Mammary epithelial cell (primary cell): ENCODE measurements at regions of chr11 and their contacts with region 1.

Region 1: DNA sequence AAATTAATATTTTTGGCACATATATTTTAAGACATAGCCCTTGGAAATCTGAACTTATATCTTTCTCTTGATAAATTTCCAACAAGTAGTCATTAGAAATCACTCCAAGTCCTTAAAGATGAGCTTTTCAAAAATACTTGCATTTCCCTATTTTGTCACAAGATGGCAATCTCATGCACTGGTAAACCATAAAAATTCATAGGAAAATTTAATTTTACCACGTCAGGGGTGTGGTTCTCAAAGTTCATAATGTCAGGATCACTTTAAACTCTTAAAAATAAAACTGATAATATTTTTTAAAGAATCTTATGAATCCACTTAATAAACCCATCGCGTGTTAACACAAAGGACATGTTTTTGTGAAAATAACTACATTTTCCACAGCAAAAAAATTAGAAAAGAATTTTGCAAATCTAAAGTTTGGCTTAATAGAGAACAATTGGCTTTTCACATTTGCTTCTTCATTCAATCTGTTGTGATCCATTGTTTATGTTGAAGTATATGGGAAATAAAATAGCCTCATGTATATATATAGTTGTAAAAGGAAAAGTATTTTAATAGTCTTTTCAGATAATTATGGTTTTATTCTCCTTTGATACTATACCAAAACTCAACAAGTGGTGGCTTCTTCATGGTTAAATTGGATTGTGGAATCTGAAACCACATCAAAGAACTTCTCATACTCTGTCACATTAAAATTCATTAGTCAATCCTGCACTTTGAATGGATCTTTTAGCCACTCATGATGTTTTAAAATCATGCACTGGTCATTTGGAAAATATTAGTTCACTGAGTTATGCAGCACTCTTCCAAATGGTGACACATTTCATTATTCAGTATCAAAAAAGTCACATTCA is 169.1 kb downstream of the CADM1 start:
- DNase-seq: peak; percentile 3
- H3K4me3 ChIP-seq: no peak overlapping the region
- H3K27ac ChIP-seq: no peak overlapping the region
- H3K4me1 ChIP-seq: peaks cover 4% of the 10 kb centered on the region
- H3K27me3 ChIP-seq: no peaks in the 10 kb centered on the region
- CTCF ChIP-seq: peak; percentile 64 to 71

Region 2: DNA sequence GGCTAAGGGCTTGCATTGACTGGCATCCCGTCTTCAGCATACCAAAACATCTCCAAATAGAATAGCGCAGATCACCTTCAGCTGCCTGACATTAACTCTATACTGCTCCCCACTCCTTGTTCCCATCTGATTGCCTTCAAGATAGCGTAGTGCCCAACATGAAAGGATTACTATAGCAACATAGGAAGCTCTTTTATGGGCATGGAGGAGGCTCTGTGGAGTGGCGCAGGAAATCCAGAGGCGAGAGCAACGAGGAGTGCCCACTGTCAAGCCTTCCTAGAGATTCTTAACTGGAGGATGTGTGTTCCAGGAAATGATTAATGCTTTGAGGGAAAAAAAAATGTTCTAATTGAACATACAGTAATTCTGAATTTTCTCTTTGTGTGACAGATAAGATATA is 44.3 kb before region 1 on chr11:
- CTCF ChIA-PET with region 1: no interaction called
- dilution Hi-C with region 1: no loop called
- in situ Hi-C with region 1: no loop called
- intact Hi-C with region 1: no loop called
- DNase-seq: no peak
- H3K4me3 ChIP-seq: no peak overlapping the region
- H3K27ac ChIP-seq: no peak overlapping the region
- H3K4me1 ChIP-seq: no peaks in the 10 kb centered on the region
- H3K27me3 ChIP-seq: no peaks in the 10 kb centered on the region
- CTCF ChIP-seq: no peak

Region 3: GRCh38 chr11:115347138-115347537 is 12.0 kb after region 1 on chr11:
- CTCF ChIA-PET with region 1: no interaction called
- dilution Hi-C with region 1: no loop called
- in situ Hi-C with region 1: no loop called
- intact Hi-C with region 1: no loop called
- DNase-seq: no peak
- H3K4me3 ChIP-seq: no peak overlapping the region
- H3K27ac ChIP-seq: no peak overlapping the region
- H3K4me1 ChIP-seq: no peaks in the 10 kb centered on the region
- H3K27me3 ChIP-seq: no peaks in the 10 kb centered on the region
- CTCF ChIP-seq: no peak

Region 4: GRCh38 chr11:115623021-115623451 is 287.9 kb after region 1 on chr11:
- CTCF ChIA-PET with region 1: no interaction called
- dilution Hi-C with region 1: no loop called
- in situ Hi-C with region 1: no loop called
- intact Hi-C with region 1: loop called (anchors 1 kb)
- DNase-seq: peak; percentile 68
- H3K4me3 ChIP-seq: no peak overlapping the region
- H3K27ac ChIP-seq: peak overlapping the region; percentile 5
- H3K4me1 ChIP-seq: peaks cover 34% of the 10 kb centered on the region
- H3K27me3 ChIP-seq: no peaks in the 10 kb centered on the region
- CTCF ChIP-seq: no peak

Region 5: DNA sequence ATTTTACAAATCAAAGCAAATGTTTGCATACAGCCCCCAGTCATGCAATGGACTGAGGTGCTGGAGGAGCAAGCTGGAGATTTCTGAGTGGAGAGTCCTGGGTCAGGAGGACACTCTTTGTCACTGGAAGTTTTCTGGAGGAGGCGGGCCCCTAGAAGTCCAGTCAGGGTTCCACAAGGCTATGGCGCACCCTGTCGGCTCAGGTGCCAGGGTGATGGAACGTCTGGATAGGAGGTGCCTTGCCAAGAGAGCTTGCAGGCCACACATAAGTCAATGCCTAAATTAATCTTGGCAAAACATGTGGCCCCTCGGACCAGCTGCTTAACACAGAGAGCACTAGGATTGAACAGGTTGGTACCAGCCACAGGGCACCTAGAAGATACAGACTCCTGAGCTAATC is 343.8 kb after region 1 on chr11:
- CTCF ChIA-PET with region 1: no interaction called
- dilution Hi-C with region 1: no loop called
- in situ Hi-C with region 1: no loop called
- intact Hi-C with region 1: loop called (anchors 2 kb)
- DNase-seq: no peak
- H3K4me3 ChIP-seq: no peak overlapping the region
- H3K27ac ChIP-seq: no peak overlapping the region
- H3K4me1 ChIP-seq: peaks cover 15% of the 10 kb centered on the region
- H3K27me3 ChIP-seq: no peaks in the 10 kb centered on the region
- CTCF ChIP-seq: peak; percentile 34 to 57

Region 6: DNA sequence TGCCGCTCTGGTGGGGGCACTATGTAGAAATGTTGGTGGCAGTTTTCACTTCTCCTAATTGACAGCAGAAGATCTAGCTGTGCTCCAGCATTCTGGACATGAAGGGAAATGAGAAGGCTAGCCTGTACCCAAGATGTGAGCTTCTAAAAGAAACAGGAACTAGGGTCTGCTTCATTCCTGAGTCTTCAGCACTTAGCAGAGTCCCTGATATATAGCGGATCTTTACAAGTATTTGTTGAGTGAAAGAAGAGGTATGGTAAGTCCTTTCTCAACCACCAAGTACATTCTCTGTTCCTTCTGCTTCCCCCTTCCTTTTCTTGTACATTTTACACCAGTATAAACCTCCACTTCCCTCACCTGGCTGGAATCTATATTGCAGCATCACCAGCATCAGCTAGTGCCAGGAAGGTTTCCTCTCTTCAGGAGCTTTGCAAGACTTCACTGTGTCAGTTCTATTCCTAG is 577.4 kb after region 1 on chr11:
- CTCF ChIA-PET with region 1: no interaction called
- dilution Hi-C with region 1: no loop called
- in situ Hi-C with region 1: loop called in 1 of 2 experiments (anchors 25 kb)
- intact Hi-C with region 1: loop called (anchors 2 kb)
- DNase-seq: peak; percentile 30
- H3K4me3 ChIP-seq: no peak overlapping the region
- H3K27ac ChIP-seq: no peak overlapping the region
- H3K4me1 ChIP-seq: no peaks in the 10 kb centered on the region
- H3K27me3 ChIP-seq: no peaks in the 10 kb centered on the region
- CTCF ChIP-seq: peak; percentile 60 to 71

Region 7: DNA sequence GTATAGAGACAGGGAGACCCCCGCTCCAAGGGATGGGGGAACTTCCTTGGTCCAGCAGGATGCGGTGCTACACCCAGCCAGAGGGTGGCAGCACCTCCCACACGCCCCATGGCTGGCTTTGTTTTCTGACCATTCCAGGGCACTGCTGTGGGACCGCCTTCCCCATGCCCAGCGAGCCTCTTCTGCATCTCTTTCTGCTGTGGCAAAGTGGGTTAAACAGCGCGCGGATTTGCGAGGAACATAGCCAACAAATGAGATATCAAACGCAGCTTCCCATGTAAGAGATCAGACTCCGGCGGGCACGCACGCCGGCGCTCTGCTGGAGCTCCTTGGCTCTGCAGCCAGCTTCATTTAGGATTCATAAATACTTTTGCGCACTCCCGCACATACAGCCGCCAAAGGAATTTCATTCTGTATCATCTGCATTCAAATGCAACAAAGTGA is 654.9 kb after region 1 on chr11:
- CTCF ChIA-PET with region 1: interaction called, 11 read pairs
- dilution Hi-C with region 1: no loop called
- in situ Hi-C with region 1: no loop called
- intact Hi-C with region 1: no loop called
- DNase-seq: no peak
- H3K4me3 ChIP-seq: peak overlapping the region in 1 of 3 experiments; percentile 31
- H3K27ac ChIP-seq: no peak overlapping the region
- H3K4me1 ChIP-seq: no peaks in the 10 kb centered on the region
- H3K27me3 ChIP-seq: no peaks in the 10 kb centered on the region
- CTCF ChIP-seq: peak; percentile 54 to 76

Region 8: DNA sequence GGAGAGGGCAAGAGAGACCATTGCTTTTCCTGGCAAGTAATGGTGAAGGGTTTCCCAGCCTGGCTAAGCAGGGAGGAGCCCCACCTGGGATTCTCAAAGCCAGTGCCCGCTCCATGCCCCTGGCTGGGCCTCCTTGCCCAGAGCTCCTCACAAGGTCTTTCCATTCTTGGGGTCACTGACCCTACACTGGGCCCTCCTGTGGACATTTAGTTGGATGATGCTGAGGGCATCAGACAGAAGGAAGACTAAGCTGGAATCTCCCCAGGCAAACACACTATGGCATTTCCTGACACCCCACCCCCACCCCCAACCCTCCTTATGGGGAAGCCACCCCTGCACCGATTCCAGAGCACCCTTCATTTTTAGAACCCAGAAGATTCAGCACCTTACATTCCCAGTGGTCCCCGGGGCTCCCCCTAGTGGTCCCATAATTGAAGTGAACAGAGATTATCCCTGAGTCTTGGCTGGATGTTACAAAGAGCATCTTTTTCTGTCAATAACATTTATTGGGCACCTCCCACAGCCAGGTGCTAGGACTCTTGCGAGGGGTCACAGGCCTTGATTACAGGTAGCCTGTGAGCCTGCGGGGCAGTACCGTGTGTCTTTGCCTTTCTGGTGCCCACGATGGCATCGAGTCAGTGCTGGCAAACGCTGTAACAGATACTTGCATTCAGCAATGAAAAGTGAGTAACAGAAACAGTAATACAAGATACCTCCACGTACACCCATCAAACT is 889.2 kb after region 1 on chr11:
- CTCF ChIA-PET with region 1: no interaction called
- dilution Hi-C with region 1: no loop called
- in situ Hi-C with region 1: loop called in 1 of 2 experiments (anchors 25 kb)
- intact Hi-C with region 1: loop called (anchors 1 kb)
- DNase-seq: no peak
- H3K4me3 ChIP-seq: no peak overlapping the region
- H3K27ac ChIP-seq: no peak overlapping the region
- H3K4me1 ChIP-seq: no peaks in the 10 kb centered on the region
- H3K27me3 ChIP-seq: peaks cover 4% of the 10 kb centered on the region
- CTCF ChIP-seq: peak; percentile 67 to 80

Region 9: GRCh38 chr11:116641561-116642045 is 1306.4 kb after region 1 on chr11:
- CTCF ChIA-PET with region 1: no interaction called
- dilution Hi-C with region 1: no loop called
- in situ Hi-C with region 1: no loop called
- intact Hi-C with region 1: loop called (anchors 5 kb)
- DNase-seq: peak; percentile 14
- H3K4me3 ChIP-seq: no peak overlapping the region
- H3K27ac ChIP-seq: no peak overlapping the region
- H3K4me1 ChIP-seq: no peaks in the 10 kb centered on the region
- H3K27me3 ChIP-seq: no peaks in the 10 kb centered on the region
- CTCF ChIP-seq: peak; percentile 87 to 95